ENCODE measurements at regions of chr6 and their contacts with region 1.

Region 1: GRCh38 chr6:28981833-28982475 is 23.2 kb downstream of the ZNF311 start:
- DNase-seq: peak; percentile 78
- ATAC-seq: peak; percentile 91

Region 2: GRCh38 chr6:28863604-28864320 is 118.2 kb before region 1 on chr6:
- intact Hi-C with region 1: loop called (anchors 10 kb)
- DNase-seq: peak; percentile 77
- ATAC-seq: peak; percentile 85

Region 3: GRCh38 chr6:28895134-28895812 is 86.7 kb before region 1 on chr6:
- intact Hi-C with region 1: loop called (anchors 2 kb)
- DNase-seq: peak; percentile 93
- ATAC-seq: peak; percentile 92

Region 4: DNA sequence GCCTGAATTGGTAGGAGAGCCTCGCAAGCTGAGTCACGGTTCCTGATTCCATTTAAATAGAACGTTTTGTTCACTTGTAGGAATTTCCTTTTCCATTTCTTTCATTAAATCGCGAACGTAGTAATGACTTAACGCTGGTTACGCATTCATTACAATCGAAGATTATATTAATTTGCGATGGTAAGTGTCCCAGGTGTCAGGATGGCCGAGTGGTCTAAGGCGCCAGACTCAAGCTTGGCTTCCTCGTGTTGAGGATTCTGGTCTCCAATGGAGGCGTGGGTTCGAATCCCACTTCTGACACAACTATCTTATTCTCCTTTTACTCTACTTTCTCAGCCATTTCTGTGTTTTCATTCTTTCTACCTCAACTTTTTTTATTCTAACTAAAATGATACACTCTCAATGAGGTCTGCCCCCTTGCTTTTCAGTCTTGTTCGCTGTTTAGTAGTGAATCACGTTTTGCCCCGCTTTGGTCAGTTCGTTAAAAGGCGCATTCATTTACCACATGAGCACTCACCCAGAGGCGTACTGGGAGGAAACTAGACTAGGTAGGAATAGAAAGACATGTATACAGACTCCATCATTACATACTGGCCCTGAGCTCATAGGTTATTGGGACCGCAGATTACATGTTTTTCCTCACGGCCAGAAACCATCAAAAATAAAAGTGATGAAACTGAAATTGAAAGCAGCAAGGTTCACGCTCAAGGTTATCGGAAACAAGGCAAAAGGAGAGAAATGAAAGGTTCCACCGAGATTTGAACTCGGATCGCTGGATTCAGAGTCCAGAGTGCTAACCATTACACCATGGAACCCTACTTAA is 40.9 kb before region 1 on chr6:
- intact Hi-C with region 1: loop called (anchors 5 kb)
- DNase-seq: peak; percentile 62
- ATAC-seq: peak; percentile 87

Measured in Right ventricle myocardium superior (tissue), 1 donor.